Caco-2 (cell line): ENCODE measurements at regions of chr17 and their contacts with region 1.

Region 1: DNA sequence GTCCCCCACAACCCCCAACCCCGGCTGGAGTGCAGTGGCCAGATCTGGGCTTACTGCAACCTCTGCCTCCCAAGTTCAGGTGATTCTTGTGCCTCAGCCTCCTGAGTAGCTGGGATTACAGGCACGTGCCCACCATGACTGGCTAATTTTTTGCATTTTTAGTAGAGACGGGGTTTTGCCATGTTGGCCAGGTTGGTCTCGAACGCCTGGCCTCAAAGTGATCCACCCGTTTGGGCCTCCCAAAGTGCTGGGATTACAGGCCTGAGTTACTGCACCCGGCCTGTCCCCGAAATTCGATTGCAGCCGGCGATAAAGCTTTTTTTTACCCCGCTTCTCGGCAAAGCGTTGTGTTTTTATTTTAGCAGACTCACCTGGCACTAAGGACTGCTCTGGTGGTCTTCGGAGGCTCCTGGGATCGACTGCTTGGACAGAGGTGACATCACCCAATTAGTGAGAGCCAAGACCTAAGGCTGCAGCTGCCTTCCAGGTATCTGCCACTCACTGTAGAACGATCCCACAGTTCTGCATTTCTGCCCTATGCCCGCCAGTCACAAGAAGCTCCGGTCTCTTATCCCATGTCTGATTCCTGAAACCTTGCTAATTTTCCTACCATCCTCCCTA is 82.2 kb upstream of the ARL4D start:
- DNase-seq: no peak
- H3K4me3 ChIP-seq: no peak overlapping the region
- H3K4me3 Mint-ChIP-seq: no peak overlapping the region
- H3K27ac Mint-ChIP-seq: no peak overlapping the region
- H3K4me1 ChIP-seq: peaks cover 4% of the 10 kb centered on the region
- H3K4me1 Mint-ChIP-seq: peaks cover 7% of the 10 kb centered on the region
- H3K27me3 ChIP-seq: no peaks in the 10 kb centered on the region
- H3K27me3 Mint-ChIP-seq: no peaks in the 10 kb centered on the region
- CTCF ChIP-seq: no peak

Region 2: GRCh38 chr17:43024407-43025289 is 292.0 kb before region 1 on chr17 and contains the start of gene RND2:
- CTCF ChIA-PET with region 1: interaction called, 5 read pairs
- POLR2A ChIA-PET with region 1: interaction called, 10 read pairs
- intact Hi-C with region 1: loop called (anchors 5 kb)
- DNase-seq: peak; percentile 85 to 88
- H3K4me3 ChIP-seq: peak within 1 kb of the TSS; percentile 53
- H3K4me3 Mint-ChIP-seq: peak within 1 kb of the TSS; percentile 69
- H3K27ac Mint-ChIP-seq: peak within 1 kb of the TSS; percentile 85
- H3K4me1 ChIP-seq: peaks cover 12% of the 10 kb centered on the region
- H3K4me1 Mint-ChIP-seq: peaks cover 2% of the 10 kb centered on the region
- H3K27me3 ChIP-seq: no peaks in the 10 kb centered on the region
- H3K27me3 Mint-ChIP-seq: no peaks in the 10 kb centered on the region
- CTCF ChIP-seq: peak; percentile 34 to 79
- total RNA-seq, gene RND2: 1.2 and 1.7 TPM in 2 replicates

Region 3: GRCh38 chr17:43170766-43171585 is 145.7 kb before region 1 on chr17 and contains the start of gene NBR1:
- CTCF ChIA-PET with region 1: interaction called, 5 read pairs
- POLR2A ChIA-PET with region 1: interaction called, 26 read pairs
- intact Hi-C with region 1: loop called (anchors 1 kb)
- DNase-seq: peak; percentile 97 to 98
- H3K4me3 ChIP-seq: peak within 1 kb of the TSS; percentile 59
- H3K4me3 Mint-ChIP-seq: no peak within 1 kb of the TSS
- H3K27ac Mint-ChIP-seq: no peak within 1 kb of the TSS
- H3K4me1 ChIP-seq: peaks cover 39% of the 10 kb centered on the region
- H3K4me1 Mint-ChIP-seq: peaks cover 27% of the 10 kb centered on the region
- H3K27me3 ChIP-seq: no peaks in the 10 kb centered on the region
- H3K27me3 Mint-ChIP-seq: no peaks in the 10 kb centered on the region
- CTCF ChIP-seq: peak; percentile 24 to 44
- total RNA-seq, gene NBR1: 53.9 and 55.4 TPM in 2 replicates

Region 4: GRCh38 chr17:43211480-43212402 is 104.9 kb before region 1 on chr17 and contains the start of gene TMEM106A:
- CTCF ChIA-PET with region 1: interaction called, 3 read pairs
- POLR2A ChIA-PET with region 1: interaction called, 30 read pairs
- intact Hi-C with region 1: no loop called
- DNase-seq: peak; percentile 66 to 68
- H3K4me3 ChIP-seq: peak within 1 kb of the TSS; percentile 55
- H3K4me3 Mint-ChIP-seq: peak within 1 kb of the TSS; percentile 92
- H3K27ac Mint-ChIP-seq: peak within 1 kb of the TSS; percentile 77
- H3K4me1 ChIP-seq: peaks cover 17% of the 10 kb centered on the region
- H3K4me1 Mint-ChIP-seq: peaks cover 10% of the 10 kb centered on the region
- H3K27me3 ChIP-seq: no peaks in the 10 kb centered on the region
- H3K27me3 Mint-ChIP-seq: no peaks in the 10 kb centered on the region
- CTCF ChIP-seq: peak in 1 of 2 experiments; percentile 29
- total RNA-seq, gene TMEM106A: 6.9 and 8.0 TPM in 2 replicates

Region 5: GRCh38 chr17:43367737-43368242 is 51.2 kb after region 1 on chr17:
- CTCF ChIA-PET with region 1: interaction called, 3 read pairs
- POLR2A ChIA-PET with region 1: interaction called, 25 read pairs
- intact Hi-C with region 1: no loop called
- DNase-seq: peak; percentile 79 to 80
- H3K4me3 ChIP-seq: peak overlapping the region; percentile 15; the same call in 1 of the 2 replicates
- H3K4me3 Mint-ChIP-seq: peak overlapping the region; percentile 90
- H3K27ac Mint-ChIP-seq: peak overlapping the region; percentile 100
- H3K4me1 ChIP-seq: peaks cover 31% of the 10 kb centered on the region
- H3K4me1 Mint-ChIP-seq: peaks cover 43% of the 10 kb centered on the region
- H3K27me3 ChIP-seq: no peaks in the 10 kb centered on the region
- H3K27me3 Mint-ChIP-seq: peaks cover 4% of the 10 kb centered on the region
- CTCF ChIP-seq: no peak

Region 6: GRCh38 chr17:43406676-43407645 is 90.3 kb after region 1 on chr17:
- CTCF ChIA-PET with region 1: no interaction called
- POLR2A ChIA-PET with region 1: no interaction called
- intact Hi-C with region 1: no loop called
- DNase-seq: no peak
- H3K4me3 ChIP-seq: no peak overlapping the region
- H3K4me3 Mint-ChIP-seq: no peak overlapping the region
- H3K27ac Mint-ChIP-seq: peak overlapping the region; percentile 95
- H3K4me1 ChIP-seq: peaks cover 24% of the 10 kb centered on the region
- H3K4me1 Mint-ChIP-seq: peaks cover 39% of the 10 kb centered on the region
- H3K27me3 ChIP-seq: no peaks in the 10 kb centered on the region
- H3K27me3 Mint-ChIP-seq: no peaks in the 10 kb centered on the region
- CTCF ChIP-seq: no peak